ENCODE measurements at regions of chr14 and their contacts with region 1.

Region 1: GRCh38 chr14:55579724-55580469 is at the start of gene KTN1:
- DNase-seq: peak; percentile 96
- H3K4me3 Mint-ChIP-seq: peak within 1 kb of the TSS; percentile 95
- H3K27ac Mint-ChIP-seq: peak within 1 kb of the TSS; percentile 94
- H3K4me1 Mint-ChIP-seq: peaks cover 28% of the 10 kb centered on the region
- H3K27me3 Mint-ChIP-seq: no peaks in the 10 kb centered on the region
- total RNA-seq, gene KTN1: 130 and 135 TPM in 2 replicates

Region 2: DNA sequence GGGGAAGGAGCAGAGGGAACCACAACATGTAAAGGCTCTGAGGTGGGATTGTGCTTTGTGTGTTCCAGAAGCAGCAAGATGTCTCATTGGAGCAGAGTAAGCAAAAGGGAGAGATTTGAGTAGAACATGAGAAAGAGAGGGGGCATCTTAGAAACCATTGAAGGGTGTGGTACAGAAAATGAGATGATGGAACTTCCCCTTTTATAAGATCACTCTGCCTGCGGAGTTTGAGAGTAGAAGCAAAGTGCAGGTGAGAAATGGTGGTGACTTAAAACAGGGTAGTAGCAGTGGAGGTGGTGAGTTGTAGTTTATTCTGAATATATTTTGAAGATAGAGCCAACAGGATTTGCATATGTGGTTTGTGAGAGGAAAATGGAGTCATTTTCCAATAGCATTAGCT is 252.7 kb before region 1 on chr14:
- intact Hi-C with region 1: no loop called
- DNase-seq: no peak
- H3K4me3 Mint-ChIP-seq: no peak overlapping the region
- H3K27ac Mint-ChIP-seq: peak overlapping the region; percentile 3
- H3K4me1 Mint-ChIP-seq: peaks cover 45% of the 10 kb centered on the region
- H3K27me3 Mint-ChIP-seq: no peaks in the 10 kb centered on the region

Region 3: DNA sequence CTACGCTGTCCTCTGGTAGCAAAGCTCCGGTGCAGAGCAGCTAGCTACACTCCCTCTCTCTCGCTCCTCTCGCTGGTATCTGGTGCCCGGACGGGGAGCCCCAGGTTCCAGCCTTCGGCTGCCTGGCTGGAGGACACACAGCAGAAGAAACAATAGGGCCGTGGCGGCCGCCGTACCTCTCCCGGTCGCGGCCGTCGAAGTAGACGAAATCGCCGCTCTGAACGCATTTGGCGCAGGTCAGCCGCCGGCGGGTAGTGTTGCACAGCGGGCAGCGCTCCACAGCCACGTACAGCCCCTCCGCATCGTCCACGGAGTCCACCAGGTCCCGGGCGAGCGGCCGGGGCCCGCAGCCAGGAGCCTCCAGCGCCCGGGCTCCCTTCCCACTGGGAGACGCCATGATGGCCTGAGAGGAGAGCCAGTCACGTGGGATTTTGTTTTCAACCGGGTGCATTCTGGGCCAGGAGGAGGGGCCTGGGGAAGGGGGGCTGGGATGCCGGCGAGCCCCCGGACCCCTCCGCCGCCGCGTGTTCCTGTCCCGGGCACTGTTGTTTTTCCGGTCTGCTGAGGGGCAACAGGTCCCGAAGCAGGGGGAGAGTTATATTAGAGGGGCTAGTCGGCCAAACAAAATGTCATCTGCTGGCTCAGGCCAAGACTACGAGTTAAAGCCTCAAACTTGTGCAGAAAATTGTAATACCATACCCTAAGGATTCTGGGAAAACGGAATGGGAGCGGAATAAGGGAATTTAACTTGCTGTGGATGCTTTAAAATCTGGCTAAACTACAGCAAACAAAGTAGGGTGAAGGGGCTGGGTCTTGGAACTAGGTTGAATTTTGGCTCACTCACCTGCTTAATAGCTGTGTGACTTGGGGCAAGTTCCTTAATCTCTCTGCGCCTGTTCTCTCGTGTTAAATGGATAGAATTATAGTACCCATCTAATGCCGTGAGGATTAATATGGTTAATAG is 168.2 kb before region 1 on chr14 and contains the start of gene ATG14:
- intact Hi-C with region 1: loop called (anchors 1 kb)
- DNase-seq: peak; percentile 93
- H3K4me3 Mint-ChIP-seq: peak within 1 kb of the TSS; percentile 91
- H3K27ac Mint-ChIP-seq: peak within 1 kb of the TSS; percentile 92
- H3K4me1 Mint-ChIP-seq: peaks cover 26% of the 10 kb centered on the region
- H3K27me3 Mint-ChIP-seq: peaks cover 4% of the 10 kb centered on the region
- total RNA-seq, gene ATG14: 4.9 and 5.8 TPM in 2 replicates

Region 4: DNA sequence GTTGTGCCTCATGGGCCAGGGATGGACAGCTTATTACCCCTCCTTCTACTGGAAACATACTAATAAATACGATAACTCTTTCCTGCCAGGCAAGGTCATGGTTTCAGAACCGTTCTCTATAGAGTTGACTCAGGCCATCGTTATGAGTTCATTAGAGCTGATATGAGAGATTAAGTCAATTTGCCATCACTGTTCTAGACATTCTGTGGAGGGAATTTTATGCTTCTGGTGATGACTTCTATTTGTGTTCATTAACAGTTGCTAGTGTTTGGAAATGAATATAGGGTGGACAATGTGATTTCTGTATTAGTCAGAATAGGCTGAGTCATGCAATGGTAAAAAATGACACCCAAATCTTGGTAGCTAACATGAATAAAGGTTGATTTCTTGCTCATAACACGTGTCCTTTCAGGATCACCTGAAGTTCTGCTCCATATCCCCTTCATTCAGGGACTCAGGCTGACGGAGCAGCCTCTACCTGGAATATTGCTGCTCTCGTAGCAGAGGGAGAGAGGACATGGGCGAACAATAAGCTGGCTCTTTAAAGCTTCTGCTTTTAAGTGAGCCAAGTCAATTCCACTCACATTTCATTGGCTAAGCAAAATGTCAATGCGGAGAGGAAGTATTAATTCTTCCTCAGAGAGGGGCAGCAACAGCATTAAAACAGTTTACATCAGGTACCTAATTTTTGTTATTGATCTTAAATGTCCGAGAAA is 120.9 kb before region 1 on chr14:
- intact Hi-C with region 1: loop called (anchors 5 kb)
- DNase-seq: no peak
- H3K4me3 Mint-ChIP-seq: no peak overlapping the region
- H3K27ac Mint-ChIP-seq: no peak overlapping the region
- H3K4me1 Mint-ChIP-seq: peaks cover 7% of the 10 kb centered on the region
- H3K27me3 Mint-ChIP-seq: peaks cover 3% of the 10 kb centered on the region

Region 5: GRCh38 chr14:55482936-55483605 is 96.8 kb before region 1 on chr14:
- intact Hi-C with region 1: no loop called
- DNase-seq: no peak
- H3K4me3 Mint-ChIP-seq: no peak overlapping the region
- H3K27ac Mint-ChIP-seq: no peak overlapping the region
- H3K4me1 Mint-ChIP-seq: no peaks in the 10 kb centered on the region
- H3K27me3 Mint-ChIP-seq: peaks cover 3% of the 10 kb centered on the region

Region 6: GRCh38 chr14:55807059-55807499 is 227.2 kb after region 1 on chr14:
- intact Hi-C with region 1: no loop called
- DNase-seq: peak; percentile 93
- H3K4me3 Mint-ChIP-seq: peak overlapping the region; percentile 53
- H3K27ac Mint-ChIP-seq: peak overlapping the region; percentile 84
- H3K4me1 Mint-ChIP-seq: peaks cover 53% of the 10 kb centered on the region
- H3K27me3 Mint-ChIP-seq: no peaks in the 10 kb centered on the region

Region 7: DNA sequence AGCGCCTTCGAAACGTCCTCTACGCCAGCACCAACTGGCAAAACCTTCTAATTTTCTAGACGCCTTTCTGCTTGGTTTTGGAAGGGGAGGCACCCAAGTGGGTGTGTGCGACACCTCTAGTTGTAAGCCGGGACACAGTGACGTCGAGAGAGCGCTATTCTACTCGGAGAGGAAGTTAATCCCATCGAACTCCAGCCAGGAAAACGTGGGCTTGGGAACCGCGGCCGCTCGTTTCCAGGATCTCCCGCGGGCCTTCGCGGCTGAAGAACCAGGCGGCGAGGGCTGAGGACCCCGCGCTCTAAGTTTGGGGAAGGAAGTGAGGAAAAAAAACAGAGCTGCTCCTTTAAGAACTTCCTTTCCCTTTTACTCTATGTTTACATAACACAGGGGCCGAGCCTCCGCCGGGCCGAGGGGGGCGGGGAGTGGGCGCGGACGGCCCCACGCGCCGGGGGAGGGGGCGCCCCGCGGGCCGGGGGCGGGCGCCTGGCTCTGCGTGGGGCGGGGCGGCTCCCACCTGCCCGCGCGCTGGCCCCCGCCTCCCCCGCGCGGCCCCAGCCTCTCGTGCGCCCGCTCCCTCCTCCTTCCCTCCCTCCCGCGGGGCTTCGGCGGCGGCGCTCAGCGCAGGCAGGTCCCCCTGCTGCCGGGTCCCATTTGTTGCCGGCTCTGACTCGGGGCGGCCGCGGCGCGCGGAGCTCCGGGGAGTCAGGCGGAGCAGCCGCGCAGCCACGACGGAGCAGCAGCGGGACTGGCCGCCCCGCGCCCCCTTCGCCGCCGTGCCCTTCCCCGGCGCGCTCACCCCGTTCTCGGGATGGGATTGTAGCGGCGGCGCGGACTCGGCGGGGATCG is 538.1 kb after region 1 on chr14 and contains the start of gene PELI2:
- intact Hi-C with region 1: loop called (anchors 5 kb)
- DNase-seq: peak; percentile 94
- H3K4me3 Mint-ChIP-seq: peak within 1 kb of the TSS; percentile 93
- H3K27ac Mint-ChIP-seq: peak within 1 kb of the TSS; percentile 67
- H3K4me1 Mint-ChIP-seq: peaks cover 31% of the 10 kb centered on the region
- H3K27me3 Mint-ChIP-seq: peaks cover 50% of the 10 kb centered on the region
- total RNA-seq, gene PELI2: 2.8 and 3.0 TPM in 2 replicates